Adrenal gland (tissue), 19 donors: ENCODE measurements at regions of chr19 and their contacts with region 1.

Region 1: DNA sequence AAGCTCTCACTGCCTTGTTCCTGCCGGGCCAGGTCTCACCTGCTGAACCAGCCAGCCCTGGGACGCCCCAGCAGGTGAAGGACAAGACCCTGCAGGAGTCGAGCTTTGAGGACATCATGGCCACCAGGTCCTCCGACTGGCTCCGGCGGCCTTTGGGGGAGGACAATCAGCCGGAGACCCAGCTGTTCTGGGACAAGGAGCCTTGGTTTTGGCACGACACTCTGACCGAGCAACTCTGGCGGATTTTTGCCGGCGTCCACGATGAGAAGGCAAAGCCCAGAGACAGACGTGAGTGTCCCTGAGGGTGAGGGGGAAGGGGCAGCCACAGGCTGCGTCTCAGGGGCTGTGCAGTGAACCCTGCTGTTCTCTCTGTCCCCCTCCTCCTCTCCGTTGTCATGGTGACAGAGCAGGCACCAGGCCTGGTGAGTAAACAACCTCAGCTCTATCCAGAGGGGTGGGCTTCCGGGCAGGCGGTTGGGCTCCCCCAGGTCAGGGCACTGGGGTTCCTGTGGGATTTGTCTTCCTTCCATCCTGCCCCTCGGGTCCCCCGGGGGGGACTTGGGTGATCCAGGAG is 9.7 kb downstream of the TLE6 start:
- DNase-seq: no peak
- H3K4me3 ChIP-seq: no peak overlapping the region
- H3K27ac ChIP-seq: peak overlapping the region in 1 of 5 donors; percentile 22
- H3K4me1 ChIP-seq: peaks cover 14 to 23% of the 10 kb centered on the region in 2 donors
- H3K27me3 ChIP-seq: no peaks in the 10 kb centered on the region
- CTCF ChIP-seq: no peak
- POLR2A ChIP-seq: no peak

Region 2: DNA sequence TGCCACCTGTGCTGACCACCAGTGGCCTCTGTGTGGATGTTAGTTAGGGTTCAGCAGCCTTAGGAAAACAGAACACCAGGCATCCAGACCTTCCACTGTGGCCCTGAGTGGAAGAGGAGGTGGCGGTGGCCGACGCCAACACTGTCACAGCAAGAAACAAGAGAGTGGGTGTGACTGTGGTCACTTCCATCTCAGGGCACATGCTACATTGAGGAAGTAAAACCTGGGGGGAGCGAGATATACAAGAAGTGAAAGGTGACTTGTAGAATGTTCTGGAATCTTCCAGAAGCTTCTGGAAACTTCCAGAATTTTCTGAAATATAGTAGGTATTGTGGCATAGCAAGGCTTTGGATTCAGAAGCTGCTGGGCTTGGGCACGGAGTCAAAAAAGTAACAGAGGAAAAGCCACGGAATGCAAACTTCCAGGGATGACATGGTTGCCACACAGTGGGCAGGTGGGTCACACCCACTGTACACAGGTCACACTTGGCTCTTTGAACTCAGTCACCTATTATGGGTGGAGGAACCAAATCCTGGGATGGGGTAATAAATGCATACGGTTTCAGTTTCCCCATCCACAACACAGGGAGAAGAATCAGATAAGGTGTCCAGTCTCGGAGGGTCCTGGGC is 308.9 kb before region 1 on chr19:
- intact Hi-C with region 1: no loop called
- DNase-seq: no peak
- H3K4me3 ChIP-seq: no peak overlapping the region
- H3K27ac ChIP-seq: no peak overlapping the region
- H3K4me1 ChIP-seq: no peaks in the 10 kb centered on the region
- H3K27me3 ChIP-seq: no peaks in the 10 kb centered on the region
- CTCF ChIP-seq: no peak
- POLR2A ChIP-seq: no peak

Region 3: DNA sequence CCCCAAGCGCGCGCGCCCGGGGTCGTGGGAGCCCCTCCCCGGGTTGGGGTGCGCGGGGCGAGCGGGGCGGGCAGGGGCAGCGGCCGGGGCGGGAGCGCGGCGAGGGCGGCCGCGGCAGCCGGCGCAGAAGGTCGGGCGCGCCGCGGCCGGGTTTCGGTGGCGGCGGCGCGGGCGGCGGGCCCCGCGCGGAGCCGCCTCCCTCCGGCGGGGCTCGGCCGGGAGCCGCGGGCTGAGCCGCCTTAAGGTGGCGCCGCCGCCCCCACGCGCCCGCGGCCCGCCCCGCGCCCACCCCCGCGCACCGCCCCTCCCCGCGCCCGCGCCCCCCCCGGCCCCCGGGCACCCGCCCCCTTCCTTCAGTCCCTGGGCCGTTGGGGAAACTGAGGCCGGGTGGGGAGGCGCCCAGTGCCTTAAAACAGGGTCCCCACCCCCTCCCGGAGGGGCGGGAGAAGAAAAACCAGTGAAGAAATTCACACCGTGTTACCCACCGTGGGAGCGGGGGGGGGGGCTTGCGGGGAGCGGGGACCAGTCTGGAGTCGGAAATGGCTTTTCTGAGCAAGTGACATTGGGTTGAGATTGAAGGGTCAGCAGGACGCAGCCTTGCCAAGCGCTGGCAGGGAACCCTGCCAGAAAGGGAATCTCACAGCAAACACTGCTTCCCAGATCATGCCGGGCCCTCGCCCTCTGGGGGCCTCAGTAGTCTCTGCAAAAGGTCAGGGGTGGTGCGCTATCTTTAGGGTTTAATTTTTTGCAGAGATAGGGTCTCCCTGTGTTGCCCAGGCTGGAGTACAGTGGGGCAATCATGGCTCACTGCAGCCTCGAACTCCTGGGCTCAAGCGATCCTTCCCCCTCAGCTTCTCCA is 42.3 kb after region 1 on chr19 and contains the start of gene TLE2:
- intact Hi-C with region 1: loop called in 1 of 2 experiments (anchors 5 kb)
- DNase-seq: peak in 1 of 7 donors; percentile 37
- H3K4me3 ChIP-seq: peak within 1 kb of the TSS; percentile 6 to 73 (median 20)
- H3K27ac ChIP-seq: peak within 1 kb of the TSS in 4 of 5 donors; percentile 11 to 81 (median 44)
- H3K4me1 ChIP-seq: peaks cover 8 to 9% of the 10 kb centered on the region in 2 donors
- H3K27me3 ChIP-seq: no peaks in the 10 kb centered on the region
- CTCF ChIP-seq: no peak
- POLR2A ChIP-seq: no peak
- total RNA-seq, gene TLE2: 4.0 to 104 (median 55.6) TPM